ENCODE measurements at regions of chr16 and their contacts with region 1.

Region 1: DNA sequence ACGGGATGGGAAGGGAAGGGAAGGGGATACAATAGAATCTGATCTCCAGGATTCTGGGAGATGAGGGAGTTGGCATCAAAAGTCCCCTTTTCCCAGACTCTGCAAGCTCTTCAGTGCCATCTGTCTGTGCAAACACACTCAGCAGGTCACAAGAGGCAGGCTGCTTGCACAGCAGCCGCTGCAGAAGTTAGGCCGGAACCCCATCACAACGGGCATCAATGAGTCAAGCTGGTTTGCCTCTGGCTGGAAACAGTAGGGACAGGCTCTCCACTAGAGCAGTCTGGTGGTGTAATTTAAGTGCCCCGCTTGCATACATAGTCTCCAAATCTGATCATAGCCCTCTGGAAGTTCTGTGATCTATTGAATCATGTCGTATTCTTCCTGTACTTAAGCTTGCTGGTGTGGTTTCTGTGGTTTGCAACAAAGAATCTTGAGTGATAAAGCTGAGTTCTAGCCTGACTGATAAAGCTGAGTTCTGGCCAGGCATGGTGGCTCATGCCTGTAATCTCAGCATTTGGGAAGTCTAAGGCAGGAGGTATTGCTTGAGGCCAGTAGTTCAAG is 33.7 kb upstream of the KDM8 start:
- DNase-seq: peak; percentile 76
- H3K4me3 ChIP-seq: no peak overlapping the region
- H3K27ac ChIP-seq: no peak overlapping the region
- H3K4me1 ChIP-seq: no peaks in the 10 kb centered on the region
- H3K27me3 ChIP-seq: no peaks in the 10 kb centered on the region
- CTCF ChIP-seq: peak; percentile 4 to 27

Region 2: DNA sequence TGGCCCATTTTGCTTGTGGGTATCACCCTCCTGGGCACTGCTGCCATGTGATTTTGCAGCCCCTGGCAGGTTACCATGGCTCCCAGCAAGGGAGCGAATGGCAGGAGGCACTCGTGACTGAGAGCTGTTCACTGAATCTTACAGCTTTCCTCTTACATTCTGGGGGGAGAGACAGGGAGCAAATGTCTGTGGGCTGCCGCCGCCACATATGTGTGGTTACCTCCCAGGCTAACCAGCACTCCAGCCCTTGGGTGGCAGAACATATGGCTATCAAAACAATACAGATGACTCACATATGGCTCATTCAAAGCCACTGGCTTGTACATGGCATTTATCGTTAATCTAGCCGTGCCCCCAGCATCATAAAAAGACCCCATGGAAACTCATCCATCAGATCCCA is 360.4 kb after region 1 on chr16:
- CTCF ChIA-PET with region 1: interaction called, 19 read pairs
- dilution Hi-C with region 1: no loop called
- in situ Hi-C with region 1: no loop called
- intact Hi-C with region 1: no loop called
- DNase-seq: no peak
- H3K4me3 ChIP-seq: no peak overlapping the region
- H3K27ac ChIP-seq: no peak overlapping the region
- H3K4me1 ChIP-seq: no peaks in the 10 kb centered on the region
- H3K27me3 ChIP-seq: no peaks in the 10 kb centered on the region
- CTCF ChIP-seq: no peak